ENCODE measurements at regions of chr10 and their contacts with region 1.

Region 1: GRCh38 chr10:102583435-102584417 is 60.6 kb upstream of the TRIM8 start:
- DNase-seq: peak; percentile 90 to 95 (median 90)
- H3K4me3 ChIP-seq: no peak overlapping the region
- H3K27ac ChIP-seq: peak overlapping the region in 1 of 2 donors; percentile 21
- H3K4me1 ChIP-seq: peaks cover 5 to 25% (median 16%) of the 10 kb centered on the region in 3 donors
- H3K27me3 ChIP-seq: no peaks in the 10 kb centered on the region
- CTCF ChIP-seq: peak; percentile 95

Region 2: GRCh38 chr10:102511583-102512274 is 72.0 kb before region 1 on chr10:
- intact Hi-C with region 1: loop called (anchors 10 kb)
- DNase-seq: peak in 4 of 5 donors; percentile 37 to 67 (median 51)
- H3K4me3 ChIP-seq: no peak overlapping the region
- H3K27ac ChIP-seq: peak overlapping the region; percentile 2 to 14
- H3K4me1 ChIP-seq: peaks cover 3 to 27% (median 21%) of the 10 kb centered on the region in 3 donors
- H3K27me3 ChIP-seq: no peaks in the 10 kb centered on the region
- CTCF ChIP-seq: no peak